PC-9 (cell line): ENCODE measurements at regions of chr17 and their contacts with region 1.

Region 1: DNA sequence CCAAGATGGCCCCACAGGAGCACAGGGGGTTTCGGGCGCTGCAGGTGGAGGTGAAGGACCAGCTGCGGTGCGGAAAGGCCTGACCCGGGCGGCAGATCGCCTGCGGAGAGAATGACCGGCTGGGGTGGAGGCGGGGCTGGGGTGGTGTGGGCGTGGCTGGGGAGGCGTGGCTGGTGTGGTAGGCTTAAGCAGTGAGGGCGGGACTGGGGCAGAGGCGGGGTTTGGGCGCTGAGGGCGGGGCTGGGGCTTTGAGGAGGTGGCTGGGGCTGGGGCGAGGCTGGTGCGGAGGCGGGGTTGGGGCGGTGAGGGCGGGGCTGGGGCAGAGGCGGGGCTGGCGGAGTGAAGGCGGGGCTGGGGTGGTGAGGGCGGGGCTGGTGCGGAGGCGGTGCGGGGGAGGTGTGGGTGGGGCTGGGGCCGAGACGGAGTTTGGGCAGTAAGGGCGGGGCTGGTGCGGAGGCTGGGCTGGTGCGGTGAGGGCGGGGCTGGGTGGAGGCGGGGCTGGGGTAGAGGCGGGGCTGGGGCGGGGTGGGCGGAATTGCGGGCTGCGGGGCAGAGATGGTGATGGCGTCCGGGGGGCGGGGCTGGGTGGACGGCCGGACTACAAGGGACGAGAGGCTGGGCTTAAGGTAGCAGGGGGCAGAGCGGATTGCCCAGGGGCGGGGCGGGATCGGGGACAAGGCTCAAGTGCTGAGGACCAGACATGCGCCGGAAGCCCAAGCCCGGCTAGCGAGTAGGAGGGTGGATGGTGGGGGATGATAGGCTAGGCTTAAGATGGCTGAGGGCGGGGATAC is 9.9 kb upstream of the GSDMA start:
- DNase-seq: peak; percentile 80 to 88
- H3K4me3 ChIP-seq: peak overlapping the region; percentile 41; the same call in 1 of the 2 replicates
- H3K27ac ChIP-seq: no peak overlapping the region
- H3K4me1 ChIP-seq: peaks cover 20% of the 10 kb centered on the region
- H3K27me3 ChIP-seq: no peaks in the 10 kb centered on the region
- CTCF ChIP-seq: no peak

Region 2: GRCh38 chr17:39636927-39637736 is 315.7 kb before region 1 on chr17 and contains the start of gene STARD3:
- CTCF ChIA-PET with region 1: interaction called, 10 read pairs
- POLR2A ChIA-PET with region 1: no interaction called
- intact Hi-C with region 1: no loop called
- DNase-seq: peak; percentile 74 to 82
- H3K4me3 ChIP-seq: peak within 1 kb of the TSS; percentile 98
- H3K27ac ChIP-seq: peak within 1 kb of the TSS; percentile 64
- H3K4me1 ChIP-seq: peaks cover 26% of the 10 kb centered on the region
- H3K27me3 ChIP-seq: no peaks in the 10 kb centered on the region
- CTCF ChIP-seq: no peak; the same call in 1 of the 2 replicates
- total RNA-seq, gene STARD3: 47.7 and 55.9 TPM in 2 replicates

Region 3: DNA sequence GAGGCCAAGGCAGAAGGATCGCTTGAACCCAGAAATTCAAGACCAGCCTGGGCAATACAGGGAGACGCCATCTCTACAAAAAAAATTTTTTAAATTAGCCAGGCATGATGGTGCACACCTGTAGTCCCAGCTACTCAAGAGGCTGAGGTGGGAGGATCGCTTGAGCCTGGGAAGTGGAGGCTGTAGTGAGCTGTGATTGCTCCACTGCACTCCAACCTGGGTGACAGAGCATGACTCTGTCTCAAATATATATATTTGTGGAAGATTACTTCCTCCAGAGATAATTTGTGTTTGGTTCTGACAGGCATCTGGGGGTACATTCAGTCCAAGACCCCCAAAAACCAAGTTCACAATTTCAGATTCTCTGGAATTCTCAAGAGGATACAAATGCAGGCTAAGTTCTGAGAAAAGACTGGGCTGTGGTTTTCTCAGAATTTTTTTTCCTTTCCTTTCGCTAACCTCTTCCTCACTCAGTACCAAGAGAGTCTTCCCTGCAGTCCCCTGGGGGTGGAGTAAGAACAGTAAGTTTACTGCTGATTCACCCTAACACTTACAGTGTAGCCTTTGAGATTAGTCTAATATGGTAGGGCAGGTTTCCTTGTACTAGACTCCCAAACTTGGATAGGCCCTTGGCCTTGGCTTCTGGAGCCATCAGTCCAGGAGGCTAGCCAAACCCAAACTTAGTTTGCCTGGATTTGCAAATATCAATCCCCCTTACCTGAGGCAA is 49.6 kb before region 1 on chr17:
- CTCF ChIA-PET with region 1: no interaction called
- POLR2A ChIA-PET with region 1: no interaction called
- intact Hi-C with region 1: no loop called
- DNase-seq: no peak
- H3K4me3 ChIP-seq: no peak overlapping the region
- H3K27ac ChIP-seq: no peak overlapping the region
- H3K4me1 ChIP-seq: peaks cover 11% of the 10 kb centered on the region
- H3K27me3 ChIP-seq: no peaks in the 10 kb centered on the region
- CTCF ChIP-seq: no peak

Region 4: GRCh38 chr17:39927101-39927928 is 25.6 kb before region 1 on chr17 and contains the starts of genes LRRC3C and ORMDL3:
- CTCF ChIA-PET with region 1: no interaction called
- POLR2A ChIA-PET with region 1: no interaction called
- intact Hi-C with region 1: no loop called
- DNase-seq: peak; percentile 77 to 88
- H3K4me3 ChIP-seq: peak within 1 kb of the TSS; percentile 98
- H3K27ac ChIP-seq: peak within 1 kb of the TSS; percentile 89
- H3K4me1 ChIP-seq: peaks cover 35% of the 10 kb centered on the region
- H3K27me3 ChIP-seq: no peaks in the 10 kb centered on the region
- CTCF ChIP-seq: no peak
- total RNA-seq, gene LRRC3C: not detected in 2 replicates
- total RNA-seq, gene ORMDL3: 51.1 and 68.1 TPM in 2 replicates